ENCODE measurements at regions of chr7 and their contacts with region 1.

Region 1: DNA sequence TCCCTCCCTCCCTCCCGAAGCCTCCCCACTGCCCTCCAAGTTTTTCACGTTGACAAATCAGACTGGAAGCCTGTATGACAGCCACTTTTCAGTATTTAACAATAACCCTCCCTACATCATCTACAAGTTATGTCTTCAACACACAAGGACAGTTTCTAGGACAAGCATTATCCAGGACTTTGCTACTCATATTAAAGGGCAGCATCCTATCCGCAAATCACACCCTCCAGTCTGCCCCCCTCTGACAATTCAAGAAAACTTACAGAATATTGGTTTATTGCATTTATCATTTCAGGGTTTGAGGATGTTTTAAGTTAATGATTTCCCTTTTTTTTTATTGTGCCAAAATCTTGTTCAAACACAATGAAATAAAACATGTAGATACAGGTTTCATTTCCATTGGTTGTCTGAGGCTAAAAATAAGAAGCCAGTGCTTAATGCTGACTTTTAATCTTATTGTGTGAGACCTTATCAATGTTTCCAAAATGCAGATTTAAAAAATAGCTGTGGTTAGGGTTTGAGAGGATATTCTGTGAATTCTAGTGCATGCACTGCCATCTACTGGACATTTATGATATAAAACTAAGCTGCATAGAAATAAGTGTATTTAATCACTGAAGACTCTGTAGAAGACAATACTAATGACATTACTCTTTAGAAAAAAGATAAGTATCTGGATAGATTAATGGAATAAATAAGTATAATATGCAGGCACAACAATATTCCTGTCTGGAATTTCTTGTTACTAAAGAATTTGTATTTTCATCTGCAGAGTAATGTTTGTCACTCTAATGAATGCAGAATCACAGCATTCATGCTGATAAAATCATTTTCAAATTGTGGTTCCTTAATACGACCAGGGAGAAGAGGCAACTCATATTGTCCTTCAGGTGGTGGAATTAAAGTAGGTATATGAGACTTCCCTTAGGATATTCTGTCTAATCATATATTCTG is 64.1 kb downstream of the CAV1 start:
- DNase-seq: no peak
- H3K4me3 Mint-ChIP-seq: no peak overlapping the region
- H3K27ac Mint-ChIP-seq: no peak overlapping the region
- H3K4me1 Mint-ChIP-seq: peaks cover 26% of the 10 kb centered on the region
- H3K27me3 Mint-ChIP-seq: peaks cover 22% of the 10 kb centered on the region

Region 2: GRCh38 chr7:116138202-116138801 is 450.6 kb before region 1 on chr7:
- CTCF ChIA-PET with region 1: interaction called, 5 read pairs
- intact Hi-C with region 1: loop called (anchors 1 kb)
- DNase-seq: peak; percentile 34
- H3K4me3 Mint-ChIP-seq: no peak overlapping the region
- H3K27ac Mint-ChIP-seq: no peak overlapping the region
- H3K4me1 Mint-ChIP-seq: peaks cover 9% of the 10 kb centered on the region
- H3K27me3 Mint-ChIP-seq: peaks cover 2% of the 10 kb centered on the region

Region 3: DNA sequence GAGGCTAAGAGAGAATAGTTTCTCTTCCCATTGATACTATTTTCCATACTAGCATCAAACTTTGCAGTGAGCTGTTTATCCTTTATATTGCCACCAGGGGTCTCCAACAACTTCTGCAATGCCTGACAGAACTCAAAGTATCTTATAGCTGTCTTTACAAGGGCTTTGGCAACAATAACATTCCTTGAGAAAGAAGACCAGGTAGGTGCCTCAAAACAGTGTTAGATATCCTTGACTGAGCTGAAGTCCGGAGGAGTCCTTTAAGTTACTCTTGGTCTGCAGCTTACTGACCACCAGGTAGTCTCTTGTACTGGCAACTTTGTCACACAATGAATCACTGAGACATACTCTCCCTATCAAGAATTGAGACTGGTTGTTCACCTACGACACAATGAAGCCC is 408.6 kb before region 1 on chr7:
- CTCF ChIA-PET with region 1: interaction called, 18 read pairs
- intact Hi-C with region 1: loop called (anchors 1 kb)
- DNase-seq: peak; percentile 20
- H3K4me3 Mint-ChIP-seq: no peak overlapping the region
- H3K27ac Mint-ChIP-seq: no peak overlapping the region
- H3K4me1 Mint-ChIP-seq: no peaks in the 10 kb centered on the region
- H3K27me3 Mint-ChIP-seq: no peaks in the 10 kb centered on the region

Region 4: GRCh38 chr7:116249708-116250553 is 339.0 kb before region 1 on chr7:
- CTCF ChIA-PET with region 1: interaction called, 50 read pairs
- intact Hi-C with region 1: no loop called
- DNase-seq: no peak
- H3K4me3 Mint-ChIP-seq: no peak overlapping the region
- H3K27ac Mint-ChIP-seq: no peak overlapping the region
- H3K4me1 Mint-ChIP-seq: peaks cover 31% of the 10 kb centered on the region
- H3K27me3 Mint-ChIP-seq: no peaks in the 10 kb centered on the region

Region 5: DNA sequence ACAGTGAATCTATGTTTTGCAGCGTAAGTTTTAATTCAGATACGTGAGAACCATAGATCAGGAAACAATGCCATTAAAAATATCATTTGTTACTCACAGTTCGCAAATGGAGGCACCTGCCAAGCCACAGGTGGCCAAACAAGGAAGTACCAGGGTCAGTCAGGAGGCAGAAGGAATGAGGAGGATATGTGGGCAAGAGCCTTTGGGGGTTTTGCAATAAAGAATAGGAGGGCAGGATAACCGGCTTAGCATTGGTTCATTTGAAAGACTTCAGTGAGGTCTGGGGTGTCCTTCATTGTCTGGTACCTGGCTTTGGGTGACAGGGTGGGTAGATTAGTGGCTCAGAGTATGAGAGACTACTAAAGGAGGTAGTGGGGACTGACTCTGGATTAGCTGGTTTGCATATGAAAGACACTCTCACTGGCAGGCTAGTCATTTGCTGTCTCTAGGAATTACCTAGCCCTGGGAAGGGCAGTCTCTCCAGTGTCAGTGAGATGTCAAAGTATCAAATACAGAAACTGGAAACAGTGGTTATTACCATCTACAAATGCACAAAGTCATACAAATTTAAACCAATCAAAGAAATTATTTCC is 221.6 kb before region 1 on chr7:
- CTCF ChIA-PET with region 1: no interaction called
- intact Hi-C with region 1: no loop called
- DNase-seq: no peak
- H3K4me3 Mint-ChIP-seq: no peak overlapping the region
- H3K27ac Mint-ChIP-seq: no peak overlapping the region
- H3K4me1 Mint-ChIP-seq: no peaks in the 10 kb centered on the region
- H3K27me3 Mint-ChIP-seq: peaks cover 12% of the 10 kb centered on the region

Region 6: DNA sequence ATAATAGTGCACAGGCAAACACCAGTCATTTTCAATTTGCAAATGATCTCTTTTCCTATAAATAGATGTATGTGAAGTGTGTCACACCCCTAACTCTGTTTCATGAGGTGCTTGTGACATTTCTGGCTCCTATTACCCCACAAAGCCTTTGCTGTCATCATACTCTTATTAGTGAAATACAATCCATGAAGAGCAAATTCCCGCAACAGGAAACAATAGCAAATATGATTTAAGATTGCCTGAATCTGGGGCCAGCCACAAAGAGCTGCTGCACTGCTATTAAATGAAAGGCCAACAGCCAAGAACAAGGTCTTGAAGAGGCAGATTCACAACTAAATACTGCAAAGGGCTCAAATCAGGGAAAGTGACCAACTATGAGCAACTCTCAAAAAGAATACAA is 185.7 kb before region 1 on chr7:
- CTCF ChIA-PET with region 1: no interaction called
- intact Hi-C with region 1: no loop called
- DNase-seq: no peak
- H3K4me3 Mint-ChIP-seq: no peak overlapping the region
- H3K27ac Mint-ChIP-seq: no peak overlapping the region
- H3K4me1 Mint-ChIP-seq: no peaks in the 10 kb centered on the region
- H3K27me3 Mint-ChIP-seq: peaks cover 24% of the 10 kb centered on the region

Region 7: GRCh38 chr7:116451958-116452729 is 136.8 kb before region 1 on chr7:
- CTCF ChIA-PET with region 1: no interaction called
- intact Hi-C with region 1: loop called (anchors 5 kb)
- DNase-seq: no peak
- H3K4me3 Mint-ChIP-seq: no peak overlapping the region
- H3K27ac Mint-ChIP-seq: no peak overlapping the region
- H3K4me1 Mint-ChIP-seq: no peaks in the 10 kb centered on the region
- H3K27me3 Mint-ChIP-seq: peaks cover 7% of the 10 kb centered on the region

Region 8: GRCh38 chr7:116601426-116601825 is 12.5 kb after region 1 on chr7:
- CTCF ChIA-PET with region 1: interaction called, 28 read pairs
- intact Hi-C with region 1: no loop called
- DNase-seq: peak; percentile 28
- H3K4me3 Mint-ChIP-seq: no peak overlapping the region
- H3K27ac Mint-ChIP-seq: no peak overlapping the region
- H3K4me1 Mint-ChIP-seq: peaks cover 3% of the 10 kb centered on the region
- H3K27me3 Mint-ChIP-seq: no peaks in the 10 kb centered on the region

Region 9: DNA sequence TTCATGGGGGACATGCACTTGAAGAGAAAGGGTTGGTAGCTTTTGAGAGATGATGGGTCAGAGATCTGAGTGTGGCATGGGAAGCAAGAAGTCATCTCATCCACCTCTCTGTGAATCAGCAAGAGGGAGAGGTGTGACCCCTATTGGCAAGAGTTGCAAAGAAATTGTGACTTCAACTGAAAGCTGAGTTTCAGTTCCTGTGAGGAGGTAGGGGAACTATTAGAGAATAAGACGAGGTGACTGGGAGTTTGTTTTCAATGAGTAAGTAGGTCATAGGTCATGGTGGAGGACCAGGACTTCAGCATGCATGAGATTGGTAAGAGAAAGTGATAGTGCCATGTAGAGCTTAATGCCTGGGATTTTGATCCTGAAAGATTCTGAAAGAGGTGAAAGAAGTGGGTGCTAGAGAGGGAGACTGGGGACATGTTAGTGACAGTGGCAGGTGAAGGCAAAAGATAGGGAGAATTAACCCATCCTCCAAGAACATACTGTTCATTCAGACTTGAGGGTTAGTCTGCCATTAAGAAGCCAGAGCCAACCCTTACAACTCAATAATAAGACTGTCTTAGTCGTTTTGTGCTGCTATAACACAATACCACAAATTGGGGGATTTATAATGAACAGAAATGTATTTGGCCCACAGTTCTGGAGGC is 198.0 kb after region 1 on chr7:
- CTCF ChIA-PET with region 1: interaction called, 24 read pairs
- intact Hi-C with region 1: loop called (anchors 1 kb)
- DNase-seq: peak; percentile 63
- H3K4me3 Mint-ChIP-seq: no peak overlapping the region
- H3K27ac Mint-ChIP-seq: no peak overlapping the region
- H3K4me1 Mint-ChIP-seq: no peaks in the 10 kb centered on the region
- H3K27me3 Mint-ChIP-seq: peaks cover 3% of the 10 kb centered on the region

Region 10: DNA sequence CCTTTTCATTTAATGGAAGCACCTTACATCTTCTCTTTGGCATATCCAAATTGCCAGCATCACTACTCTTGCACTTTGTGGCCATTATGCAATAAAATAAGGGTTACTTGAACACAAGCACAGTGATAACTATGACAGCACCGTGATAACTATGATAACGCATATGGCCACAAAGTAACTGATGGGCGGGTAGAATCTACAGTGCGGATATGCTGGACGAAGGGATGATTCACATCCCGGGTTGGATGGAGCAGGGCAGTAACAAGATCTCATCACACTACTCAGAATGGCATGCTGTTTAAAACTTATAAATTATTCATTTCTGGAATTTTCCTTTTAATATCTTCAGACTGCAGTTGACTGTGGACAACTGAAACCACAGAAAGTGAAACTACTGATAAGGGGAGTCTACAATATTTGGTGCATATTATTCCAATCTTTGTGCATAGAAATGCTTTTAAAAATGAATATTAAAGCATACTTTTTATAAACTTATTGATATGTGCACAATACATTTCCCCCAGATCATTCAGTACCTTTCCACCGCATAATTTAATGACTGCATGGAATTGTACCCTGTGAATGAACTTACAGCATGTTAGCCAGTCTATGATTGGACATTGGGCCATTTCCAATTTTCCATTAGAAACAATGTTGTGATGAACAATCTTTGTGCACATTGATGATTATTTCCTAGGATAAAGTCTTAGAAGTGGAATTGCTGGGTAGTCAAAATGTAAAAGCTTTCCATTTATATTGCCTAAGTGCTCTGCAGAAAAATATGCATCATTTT is 597.5 kb after region 1 on chr7:
- CTCF ChIA-PET with region 1: no interaction called
- intact Hi-C with region 1: no loop called
- DNase-seq: no peak
- H3K4me3 Mint-ChIP-seq: no peak overlapping the region
- H3K27ac Mint-ChIP-seq: no peak overlapping the region
- H3K4me1 Mint-ChIP-seq: no peaks in the 10 kb centered on the region
- H3K27me3 Mint-ChIP-seq: no peaks in the 10 kb centered on the region